MCF 10A (cell line): ENCODE measurements at regions of chr1 and their contacts with region 1.

Region 1: GRCh38 chr1:145963995-145964901 is at the starts of genes ANKRD34A and POLR3GL:
- DNase-seq: peak; percentile 98
- H3K4me3 Mint-ChIP-seq: peak within 1 kb of the TSS; percentile 92
- H3K27ac Mint-ChIP-seq: peak within 1 kb of the TSS; percentile 96
- H3K4me1 Mint-ChIP-seq: peaks cover 42% of the 10 kb centered on the region
- H3K27me3 Mint-ChIP-seq: no peaks in the 10 kb centered on the region
- CTCF ChIP-seq: no peak
- total RNA-seq, gene ANKRD34A: 2.6 and 3.1 TPM in 2 replicates
- total RNA-seq, gene POLR3GL: 17.6 and 20.9 TPM in 2 replicates

Region 2: DNA sequence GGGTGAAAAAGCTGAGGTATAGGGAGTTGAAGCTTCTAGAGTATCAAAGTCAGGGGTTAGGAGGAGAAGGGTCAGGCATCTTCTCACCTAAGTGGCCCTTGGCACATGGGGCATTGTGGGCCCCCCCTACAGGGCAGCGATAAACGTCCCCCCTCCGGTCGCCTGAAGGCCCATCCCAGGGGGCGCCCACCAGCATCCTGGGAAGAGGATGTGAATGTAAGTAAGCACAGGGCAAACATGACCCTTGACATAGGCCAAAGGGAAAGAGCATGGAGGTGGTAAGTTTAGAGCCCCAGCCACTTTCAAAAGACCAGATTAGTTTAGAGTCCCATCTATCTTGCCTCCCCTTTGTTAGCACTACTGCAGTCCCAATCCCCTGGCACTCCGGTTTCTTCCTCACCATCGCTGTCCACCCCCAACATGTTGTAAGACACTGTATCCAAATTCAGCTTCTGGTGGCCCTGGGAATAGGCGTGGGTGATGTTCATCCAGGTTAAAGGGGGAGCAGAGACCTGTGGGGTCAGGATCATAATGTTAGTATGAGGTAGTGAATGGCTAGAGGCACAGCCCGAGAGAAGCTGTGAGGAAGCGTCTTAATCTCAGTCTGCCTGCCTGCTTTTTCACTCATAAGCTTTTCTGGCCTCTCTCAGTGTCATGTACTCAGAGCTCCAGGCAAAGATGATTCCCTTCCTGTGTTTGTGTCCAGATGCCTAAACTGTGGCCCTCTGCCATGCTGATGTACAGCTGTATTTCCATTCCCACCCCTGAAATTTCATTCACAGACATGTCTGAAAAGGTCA is 57.1 kb before region 1 on chr1:
- CTCF ChIA-PET with region 1: interaction called, 3 read pairs
- POLR2A ChIA-PET with region 1: interaction called, 7 read pairs
- intact Hi-C with region 1: loop called (anchors 5 kb)
- DNase-seq: no peak
- H3K4me3 Mint-ChIP-seq: no peak overlapping the region
- H3K27ac Mint-ChIP-seq: peak overlapping the region; percentile 57
- H3K4me1 Mint-ChIP-seq: peaks cover 24% of the 10 kb centered on the region
- H3K27me3 Mint-ChIP-seq: no peaks in the 10 kb centered on the region
- CTCF ChIP-seq: no peak

Region 3: DNA sequence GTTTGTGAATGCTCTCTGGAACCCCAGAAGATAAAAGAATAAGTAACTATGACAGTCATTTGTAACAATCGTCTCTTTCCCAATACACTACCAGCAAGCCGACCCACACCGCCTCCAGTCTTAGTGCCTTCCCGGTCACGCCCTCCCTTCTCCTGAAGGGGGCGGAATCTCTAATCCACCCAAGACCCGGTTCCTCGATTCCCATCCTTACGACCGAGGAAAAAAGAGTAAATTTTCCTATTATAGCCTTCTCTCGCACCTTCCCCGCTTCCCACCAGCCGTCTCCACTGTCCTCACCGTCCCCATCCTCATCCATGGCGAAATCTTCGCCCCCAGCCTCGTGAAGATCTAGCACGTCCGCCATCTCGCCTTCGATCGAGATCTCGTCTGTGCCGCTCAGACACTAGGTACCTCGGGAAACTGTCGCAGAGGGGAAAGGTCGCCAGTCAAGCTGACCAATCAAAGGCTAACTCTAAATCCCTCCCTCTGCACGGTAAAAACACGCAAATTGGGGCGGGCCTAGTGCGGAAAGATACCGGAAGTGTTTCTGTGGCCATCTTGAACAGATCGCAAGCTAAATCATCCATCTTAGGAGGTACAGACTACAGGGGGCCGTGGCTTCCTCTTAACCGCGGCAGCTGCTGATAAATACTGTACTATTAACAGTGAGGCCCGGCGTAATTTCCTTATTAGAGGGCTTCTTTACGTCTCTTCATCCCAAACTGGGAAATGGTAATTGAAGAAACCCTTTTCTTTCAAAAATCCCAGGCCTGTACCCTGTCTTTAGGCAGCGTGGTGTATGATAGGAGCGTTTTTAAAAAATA is 37.0 kb before region 1 on chr1 and contains the start of gene RBM8A:
- CTCF ChIA-PET with region 1: interaction called, 9 read pairs
- POLR2A ChIA-PET with region 1: interaction called, 109 read pairs
- intact Hi-C with region 1: loop called (anchors 2 kb)
- DNase-seq: peak; percentile 100
- H3K4me3 Mint-ChIP-seq: no peak within 1 kb of the TSS
- H3K27ac Mint-ChIP-seq: no peak within 1 kb of the TSS
- H3K4me1 Mint-ChIP-seq: peaks cover 14% of the 10 kb centered on the region
- H3K27me3 Mint-ChIP-seq: no peaks in the 10 kb centered on the region
- CTCF ChIP-seq: peak; percentile 76
- total RNA-seq, gene RBM8A: 370 and 403 TPM in 2 replicates

Region 4: GRCh38 chr1:145978854-145979759 is 14.9 kb after region 1 on chr1:
- CTCF ChIA-PET with region 1: interaction called, 145 read pairs
- POLR2A ChIA-PET with region 1: interaction called, 118 read pairs
- intact Hi-C with region 1: loop called (anchors 1 kb)
- DNase-seq: peak; percentile 100
- H3K4me3 Mint-ChIP-seq: no peak overlapping the region
- H3K27ac Mint-ChIP-seq: no peak overlapping the region
- H3K4me1 Mint-ChIP-seq: peaks cover 11% of the 10 kb centered on the region
- H3K27me3 Mint-ChIP-seq: no peaks in the 10 kb centered on the region
- CTCF ChIP-seq: peak; percentile 18

Region 5: GRCh38 chr1:145996433-145997015 is 32.3 kb after region 1 on chr1 and contains the start of gene TXNIP:
- CTCF ChIA-PET with region 1: interaction called, 6 read pairs
- POLR2A ChIA-PET with region 1: interaction called, 226 read pairs
- intact Hi-C with region 1: no loop called
- DNase-seq: peak; percentile 99
- H3K4me3 Mint-ChIP-seq: peak within 1 kb of the TSS; percentile 89
- H3K27ac Mint-ChIP-seq: peak within 1 kb of the TSS; percentile 95
- H3K4me1 Mint-ChIP-seq: peaks cover 51% of the 10 kb centered on the region
- H3K27me3 Mint-ChIP-seq: no peaks in the 10 kb centered on the region
- CTCF ChIP-seq: no peak
- total RNA-seq, gene TXNIP: 576 and 599 TPM in 2 replicates

Region 6: DNA sequence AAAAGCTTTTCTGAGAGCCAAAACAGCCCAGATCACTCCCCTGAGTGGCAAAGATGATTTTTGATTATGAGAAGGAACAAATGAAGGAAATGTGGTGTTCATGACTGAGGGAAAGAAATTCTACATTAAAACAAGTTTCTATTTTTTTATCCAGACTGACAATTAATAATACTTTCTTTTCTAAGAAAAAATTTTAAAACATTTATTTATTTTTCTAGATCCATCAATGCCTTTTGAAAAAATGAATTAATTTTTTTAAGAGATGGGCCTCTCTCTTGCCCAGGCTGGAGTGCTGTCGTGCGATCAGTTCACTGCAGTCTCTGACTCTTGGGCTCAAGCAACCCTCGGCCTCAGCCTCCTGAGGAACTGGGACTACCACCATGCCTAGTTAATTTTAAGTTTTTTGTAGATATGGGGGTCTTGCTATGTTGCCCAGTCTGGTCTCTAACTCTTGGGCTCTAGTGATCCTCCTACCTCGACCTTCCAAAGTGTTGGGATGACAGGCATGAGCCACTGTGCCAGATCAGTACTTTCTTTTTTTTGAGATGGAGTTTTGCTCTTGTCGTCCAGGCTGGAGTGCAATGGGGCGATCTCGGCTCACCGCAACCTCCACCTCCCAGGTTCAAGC is 43.4 kb after region 1 on chr1:
- CTCF ChIA-PET with region 1: interaction called, 6 read pairs
- POLR2A ChIA-PET with region 1: interaction called, 36 read pairs
- intact Hi-C with region 1: no loop called
- DNase-seq: no peak
- H3K4me3 Mint-ChIP-seq: peak overlapping the region; percentile 64
- H3K27ac Mint-ChIP-seq: peak overlapping the region; percentile 97
- H3K4me1 Mint-ChIP-seq: peaks cover 33% of the 10 kb centered on the region
- H3K27me3 Mint-ChIP-seq: no peaks in the 10 kb centered on the region
- CTCF ChIP-seq: no peak

Region 7: DNA sequence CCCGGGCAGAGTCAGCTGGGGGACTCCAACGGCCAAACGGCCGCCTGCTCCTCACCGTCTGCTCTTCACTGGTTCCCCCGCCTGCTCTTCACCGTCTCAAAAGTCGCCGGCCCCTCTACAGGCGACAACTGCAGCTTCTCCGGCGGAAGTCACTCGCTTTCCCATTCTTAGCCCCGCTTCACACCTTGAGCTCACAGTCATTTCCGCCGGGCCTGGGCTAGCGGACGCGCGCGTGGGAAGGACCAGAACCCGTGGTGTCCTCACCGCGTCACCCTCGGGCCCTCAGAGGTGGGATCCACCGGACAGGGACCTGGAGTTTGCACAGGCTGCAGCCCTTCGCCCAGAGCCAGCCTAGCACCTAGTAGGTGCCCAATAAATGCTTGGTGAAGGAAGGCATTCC is 85.2 kb after region 1 on chr1:
- CTCF ChIA-PET with region 1: no interaction called
- POLR2A ChIA-PET with region 1: interaction called, 10 read pairs
- intact Hi-C with region 1: no loop called
- DNase-seq: no peak
- H3K4me3 Mint-ChIP-seq: no peak overlapping the region
- H3K27ac Mint-ChIP-seq: no peak overlapping the region
- H3K4me1 Mint-ChIP-seq: peaks cover 11% of the 10 kb centered on the region
- H3K27me3 Mint-ChIP-seq: no peaks in the 10 kb centered on the region
- CTCF ChIP-seq: no peak